Lower lobe of right lung (tissue), 2 donors: ENCODE measurements at regions of chr20 and their contacts with region 1.

Region 1: DNA sequence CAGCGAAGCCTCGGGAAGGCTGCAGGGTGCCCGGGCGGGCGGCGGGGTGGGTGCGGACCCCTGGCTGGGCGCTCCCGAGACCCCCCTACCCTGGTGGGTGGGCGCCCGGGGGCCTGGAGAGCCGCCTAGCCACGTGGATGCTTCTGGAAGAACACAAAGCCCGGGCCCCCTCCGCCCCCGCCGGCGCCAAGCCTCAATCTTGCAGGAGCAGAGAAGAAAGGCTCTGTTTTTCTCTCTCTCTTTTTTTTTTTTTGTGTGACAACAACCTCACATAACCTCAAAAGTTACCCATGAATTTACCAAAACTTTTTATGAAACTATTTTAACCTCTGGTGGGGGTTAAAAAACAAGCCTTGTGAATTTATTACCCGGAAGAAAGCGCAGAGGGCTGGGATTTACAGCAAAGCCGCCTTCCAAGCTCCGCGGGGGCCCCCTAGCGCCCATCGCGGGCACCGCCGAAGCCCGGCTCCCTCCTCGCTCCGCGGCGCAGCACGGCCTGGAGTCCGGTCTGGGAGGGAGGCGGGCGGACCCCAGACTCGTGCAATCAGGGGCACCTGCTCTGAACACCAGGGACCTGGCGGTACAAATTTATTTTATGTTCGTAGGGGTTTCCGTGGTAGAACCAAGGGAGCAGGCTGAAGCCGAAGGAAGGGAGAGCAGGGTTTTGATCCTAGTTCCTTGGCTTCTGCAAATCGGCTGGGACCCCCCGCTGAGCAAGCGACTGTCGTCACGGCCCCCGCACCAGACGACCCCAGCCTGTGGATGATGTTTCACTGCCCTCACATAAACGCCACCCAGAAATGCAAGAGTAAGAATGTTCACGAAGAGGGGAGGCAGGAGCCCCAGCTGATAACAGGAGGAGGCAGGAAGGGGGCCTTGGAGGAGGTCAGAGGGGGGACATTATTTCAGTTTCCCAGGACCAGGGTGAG is 58.9 kb downstream of the ZNF831 start:
- DNase-seq: peak; percentile 88
- ATAC-seq: peak; percentile 95 to 98
- H3K4me3 ChIP-seq: peak overlapping the region; percentile 59
- H3K27ac ChIP-seq: no peak overlapping the region
- H3K4me1 ChIP-seq: peaks cover 21% of the 10 kb centered on the region
- H3K27me3 ChIP-seq: peaks cover 47% of the 10 kb centered on the region
- CTCF ChIP-seq: peak; percentile 95

Region 2: DNA sequence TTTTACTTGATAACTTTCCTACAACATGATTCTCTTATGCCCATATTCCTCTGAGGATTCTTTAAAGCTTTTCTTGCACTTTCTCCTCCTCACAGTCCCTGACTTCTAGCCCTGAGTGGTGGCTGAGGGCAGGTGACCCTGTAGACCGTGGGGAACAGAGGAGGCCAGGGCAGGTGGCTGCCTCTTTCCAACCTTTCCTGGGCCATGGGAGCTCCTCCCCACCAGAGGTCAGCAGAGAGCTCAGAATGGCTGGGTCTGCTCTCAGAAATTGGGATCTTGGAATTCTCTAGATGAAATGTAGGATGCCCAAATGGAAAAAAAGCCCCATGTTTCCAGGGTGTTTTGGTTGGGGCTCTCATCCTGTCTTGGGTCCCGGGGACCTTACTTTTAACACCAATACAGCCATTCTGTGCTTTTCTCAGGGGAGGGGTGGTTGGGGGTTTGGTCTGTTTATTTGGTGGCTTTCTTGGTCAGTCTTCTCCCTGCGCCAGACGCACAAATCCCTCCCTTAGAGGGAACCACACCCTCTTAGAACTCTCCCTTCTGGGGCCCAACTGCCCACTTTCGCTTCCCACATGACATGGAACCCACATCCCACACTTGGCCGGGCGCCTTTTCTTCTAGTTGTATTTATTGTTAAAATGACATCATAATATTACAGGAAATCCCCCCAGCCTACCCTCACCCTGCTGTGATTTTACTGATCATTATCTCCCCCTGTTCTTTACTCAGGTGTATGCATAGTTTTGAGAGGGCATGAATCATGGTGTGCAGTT is 352.1 kb before region 1 on chr20:
- intact Hi-C with region 1: loop called (anchors 5 kb)
- DNase-seq: peak; percentile 68
- ATAC-seq: peak; percentile 91 to 94
- H3K4me3 ChIP-seq: no peak overlapping the region
- H3K27ac ChIP-seq: no peak overlapping the region
- H3K4me1 ChIP-seq: no peaks in the 10 kb centered on the region
- H3K27me3 ChIP-seq: no peaks in the 10 kb centered on the region
- CTCF ChIP-seq: peak; percentile 90

Region 3: DNA sequence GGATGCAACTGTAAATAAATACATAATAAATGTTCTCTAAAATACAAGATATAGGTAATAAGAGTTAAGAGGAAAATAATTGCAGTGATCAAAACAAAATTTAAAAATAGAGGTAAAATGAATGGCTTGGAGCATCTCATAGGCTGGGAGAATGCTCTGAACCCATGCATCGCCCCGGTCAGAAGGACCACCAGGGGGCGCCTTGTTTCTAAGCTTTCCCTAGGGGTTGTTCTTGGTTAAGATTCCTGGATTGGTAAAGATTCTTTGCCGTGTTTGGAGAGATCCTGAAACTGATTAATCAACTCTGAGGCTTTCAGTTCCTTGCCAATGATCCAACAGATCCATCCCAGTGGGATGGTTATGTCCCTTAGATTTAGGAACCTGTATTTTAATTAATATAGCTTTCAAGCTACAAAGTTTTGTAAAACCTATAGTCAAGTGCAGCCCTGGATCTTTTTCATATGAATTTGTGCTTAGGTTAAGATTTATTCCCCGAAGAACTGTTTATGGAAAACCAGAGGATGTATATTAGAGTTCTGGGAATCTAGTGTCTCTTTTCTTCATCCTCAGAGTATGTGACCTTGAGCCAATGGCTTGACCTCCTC is 134.6 kb before region 1 on chr20:
- intact Hi-C with region 1: loop called (anchors 10 kb)
- DNase-seq: peak; percentile 88
- ATAC-seq: peak; percentile 80 to 88
- H3K4me3 ChIP-seq: no peak overlapping the region
- H3K27ac ChIP-seq: no peak overlapping the region
- H3K4me1 ChIP-seq: no peaks in the 10 kb centered on the region
- H3K27me3 ChIP-seq: no peaks in the 10 kb centered on the region
- CTCF ChIP-seq: peak; percentile 97